ENCODE measurements at regions of chr19 and their contacts with region 1.

Region 1: GRCh38 chr19:55301459-55302317 is 17.9 kb downstream of the BRSK1 start:
- DNase-seq: peak; percentile 55
- ATAC-seq: peak; percentile 87
- H3K4me3 ChIP-seq: peak overlapping the region; percentile 47 to 80
- H3K27ac ChIP-seq: peak overlapping the region; percentile 75
- H3K4me1 ChIP-seq: peaks cover 8% of the 10 kb centered on the region
- H3K27me3 ChIP-seq: no peaks in the 10 kb centered on the region
- CTCF ChIP-seq: peak; percentile 99

Region 2: GRCh38 chr19:55179606-55180484 is 121.8 kb before region 1 on chr19 and contains the start of gene SYT5:
- CTCF ChIA-PET with region 1: no interaction called
- POLR2A ChIA-PET with region 1: interaction called, 13 read pairs
- in situ Hi-C with region 1: no loop called
- intact Hi-C with region 1: no loop called
- DNase-seq: no peak
- ATAC-seq: peak; percentile 74
- H3K4me3 ChIP-seq: peak within 1 kb of the TSS; percentile 41 to 67
- H3K27ac ChIP-seq: no peak within 1 kb of the TSS
- H3K4me1 ChIP-seq: no peaks in the 10 kb centered on the region
- H3K27me3 ChIP-seq: no peaks in the 10 kb centered on the region
- CTCF ChIP-seq: no peak
- total RNA-seq, gene SYT5: 3.2 TPM

Region 3: GRCh38 chr19:55270172-55270942 is 31.3 kb before region 1 on chr19:
- CTCF ChIA-PET with region 1: interaction called, 13 read pairs
- POLR2A ChIA-PET with region 1: no interaction called
- in situ Hi-C with region 1: no loop called
- intact Hi-C with region 1: no loop called
- DNase-seq: no peak
- ATAC-seq: no peak; the same call in 1 of the 2 replicates
- H3K4me3 ChIP-seq: no peak overlapping the region
- H3K27ac ChIP-seq: no peak overlapping the region
- H3K4me1 ChIP-seq: no peaks in the 10 kb centered on the region
- H3K27me3 ChIP-seq: no peaks in the 10 kb centered on the region
- CTCF ChIP-seq: no peak

Region 4: GRCh38 chr19:55339048-55339888 is 37.6 kb after region 1 on chr19 and contains the start of gene KMT5C:
- CTCF ChIA-PET with region 1: interaction called, 16 read pairs
- POLR2A ChIA-PET with region 1: interaction called, 12 read pairs
- in situ Hi-C with region 1: no loop called
- intact Hi-C with region 1: no loop called
- DNase-seq: peak; percentile 100
- ATAC-seq: peak; percentile 92
- H3K4me3 ChIP-seq: peak within 1 kb of the TSS; percentile 73 to 87
- H3K27ac ChIP-seq: peak within 1 kb of the TSS; percentile 98
- H3K4me1 ChIP-seq: peaks cover 16% of the 10 kb centered on the region
- H3K27me3 ChIP-seq: no peaks in the 10 kb centered on the region
- CTCF ChIP-seq: no peak
- total RNA-seq, gene KMT5C: 30.6 TPM

Region 5: GRCh38 chr19:55369671-55370304 is 68.1 kb after region 1 on chr19:
- CTCF ChIA-PET with region 1: no interaction called
- POLR2A ChIA-PET with region 1: no interaction called
- in situ Hi-C with region 1: no loop called
- intact Hi-C with region 1: loop called (anchors 10 kb)
- DNase-seq: no peak
- ATAC-seq: peak; percentile 70
- H3K4me3 ChIP-seq: peak overlapping the region; percentile 42 to 70
- H3K27ac ChIP-seq: no peak overlapping the region
- H3K4me1 ChIP-seq: peaks cover 29% of the 10 kb centered on the region
- H3K27me3 ChIP-seq: no peaks in the 10 kb centered on the region
- CTCF ChIP-seq: no peak